ENCODE measurements at regions of chr7 and their contacts with region 1.

Region 1: DNA sequence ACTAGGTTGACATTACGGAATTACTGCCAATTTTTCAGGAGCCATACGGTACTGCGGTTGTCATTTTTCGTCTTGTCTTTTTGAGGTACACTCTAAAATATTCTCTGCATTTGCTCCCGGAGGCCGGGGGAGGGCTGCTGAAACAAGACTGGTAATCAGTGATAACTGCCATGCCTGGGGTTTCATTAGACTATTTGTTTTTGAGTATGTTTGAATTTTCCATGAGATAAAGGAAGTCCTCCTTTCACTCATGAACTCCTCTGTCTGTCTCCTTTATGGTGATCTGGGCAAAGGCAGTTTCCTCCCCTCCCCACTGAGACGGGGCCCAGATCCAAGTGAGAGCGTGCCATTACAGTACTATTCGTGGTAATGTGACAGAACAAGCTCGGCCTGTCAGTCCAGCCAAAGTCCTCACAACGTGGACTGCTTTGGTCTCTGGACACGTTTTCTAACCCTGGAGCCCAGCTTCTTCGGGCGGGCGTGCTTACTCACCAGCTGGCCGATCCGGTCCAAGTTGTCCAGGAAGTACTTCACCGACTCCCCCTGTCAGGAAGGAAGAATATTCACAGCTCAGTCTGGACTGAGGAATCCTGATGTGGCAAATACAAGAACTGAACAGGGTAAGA is 45.1 kb downstream of the AMZ1 start:
- DNase-seq: peak; percentile 83 to 93
- H3K4me3 ChIP-seq: no peak overlapping the region
- H3K27ac ChIP-seq: peak overlapping the region; percentile 38
- H3K4me1 ChIP-seq: peaks cover 19% of the 10 kb centered on the region
- H3K27me3 ChIP-seq: no peaks in the 10 kb centered on the region
- CTCF ChIP-seq: no peak

Region 2: DNA sequence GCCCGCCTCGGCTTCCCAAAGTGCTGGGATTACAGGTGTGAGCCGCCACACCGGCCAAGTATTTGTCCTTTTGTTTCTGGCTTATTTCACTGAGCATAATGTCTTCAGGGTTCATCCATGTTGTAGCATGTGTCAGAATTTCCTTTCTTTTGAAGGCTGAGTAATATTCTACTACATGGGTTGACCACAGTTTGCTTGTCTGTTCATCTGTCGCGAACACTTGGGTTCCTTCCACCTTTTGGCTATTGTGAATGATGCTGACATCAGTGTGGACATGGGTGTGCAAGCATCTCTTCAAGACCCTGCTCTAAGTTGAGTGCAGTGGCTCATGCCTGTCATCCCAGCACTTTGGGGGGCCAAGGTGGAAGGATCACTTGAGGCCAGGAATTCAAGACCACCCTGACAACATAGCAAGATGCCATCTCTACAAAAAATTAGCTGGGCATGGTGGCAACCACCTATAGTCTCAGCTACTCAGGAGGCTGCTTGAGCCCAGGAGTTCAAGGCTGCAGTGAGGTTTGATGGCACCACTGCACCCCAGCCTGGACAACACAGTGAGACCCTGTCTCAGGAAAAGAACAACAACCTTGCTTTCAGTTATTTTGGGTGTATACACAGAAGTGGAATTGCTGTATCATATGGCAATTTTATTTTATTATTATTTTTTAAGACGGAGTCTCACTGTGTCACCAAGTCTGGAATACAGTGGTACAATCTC is 312.7 kb before region 1 on chr7:
- CTCF ChIA-PET with region 1: no interaction called
- POLR2A ChIA-PET with region 1: interaction called, 11 read pairs
- intact Hi-C with region 1: no loop called
- DNase-seq: no peak
- H3K4me3 ChIP-seq: no peak overlapping the region
- H3K27ac ChIP-seq: no peak overlapping the region
- H3K4me1 ChIP-seq: peaks cover 10% of the 10 kb centered on the region
- H3K27me3 ChIP-seq: no peaks in the 10 kb centered on the region
- CTCF ChIP-seq: no peak

Region 3: GRCh38 chr7:2544541-2545188 is 188.4 kb before region 1 on chr7:
- CTCF ChIA-PET with region 1: no interaction called
- POLR2A ChIA-PET with region 1: no interaction called
- intact Hi-C with region 1: no loop called
- DNase-seq: no peak
- H3K4me3 ChIP-seq: no peak overlapping the region
- H3K27ac ChIP-seq: no peak overlapping the region
- H3K4me1 ChIP-seq: no peaks in the 10 kb centered on the region
- H3K27me3 ChIP-seq: no peaks in the 10 kb centered on the region
- CTCF ChIP-seq: no peak

Measured in PC-9 (cell line).